ENCODE measurements at regions of chr19 and their contacts with region 1.

Region 1: DNA sequence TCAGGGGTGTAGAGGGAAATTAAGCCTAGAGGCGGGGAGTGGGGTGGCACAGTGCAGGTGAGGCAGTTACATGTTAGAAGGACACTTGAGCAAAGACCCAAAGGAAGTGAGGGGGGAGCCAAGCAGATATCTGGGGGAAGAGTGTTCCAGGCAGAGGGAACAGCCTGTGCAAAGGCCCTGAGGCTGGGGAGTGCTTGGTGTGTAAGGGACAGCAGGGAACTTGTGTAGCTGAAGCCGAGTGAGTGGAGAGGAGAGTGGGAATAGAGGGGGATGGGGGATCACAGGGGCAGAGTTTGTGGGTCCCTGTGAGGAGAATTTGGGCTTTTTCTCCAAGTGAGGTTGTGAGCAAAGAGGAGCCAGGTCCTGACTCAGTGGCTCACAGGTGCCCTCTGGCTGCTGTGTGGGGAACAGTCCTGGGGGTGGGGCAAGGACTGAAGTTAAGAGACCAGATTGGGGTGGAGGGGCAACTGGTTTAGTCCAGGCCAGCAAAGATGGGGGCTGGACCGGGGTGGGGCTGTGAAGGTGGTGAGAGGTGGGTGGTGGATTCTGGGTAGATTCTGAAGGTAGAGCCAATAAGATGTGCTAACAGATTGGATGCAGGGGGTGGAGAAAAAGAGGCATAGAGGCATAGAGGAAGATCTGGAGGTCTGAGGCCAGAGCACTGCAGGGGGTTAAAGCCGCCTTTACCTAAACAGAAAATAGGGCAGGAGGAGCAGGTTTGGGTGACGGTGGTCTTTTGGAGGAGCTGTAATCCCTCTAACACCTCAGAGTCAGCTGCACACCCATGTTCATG is 75.3 kb downstream of the CACNA1A start:
- DNase-seq: peak; percentile 59 to 78
- ATAC-seq: no peak
- H3K4me3 ChIP-seq: no peak overlapping the region
- H3K27ac ChIP-seq: no peak overlapping the region
- H3K4me1 ChIP-seq: no peaks in the 10 kb centered on the region
- H3K27me3 ChIP-seq: no peaks in the 10 kb centered on the region

Region 2: GRCh38 chr19:13277104-13277809 is 153.7 kb before region 1 on chr19:
- intact Hi-C with region 1: loop called (anchors 5 to 10 kb)
- DNase-seq: peak; percentile 64 to 71
- ATAC-seq: peak; percentile 88
- H3K4me3 ChIP-seq: no peak overlapping the region
- H3K27ac ChIP-seq: no peak overlapping the region
- H3K4me1 ChIP-seq: no peaks in the 10 kb centered on the region
- H3K27me3 ChIP-seq: no peaks in the 10 kb centered on the region

Measured in aorta (tissue), 5 donors.